ENCODE measurements at regions of chr12 and their contacts with region 1.

Region 1: GRCh38 chr12:32230613-32230993 is 124.0 kb downstream of the BICD1 start:
- DNase-seq: no peak
- ATAC-seq: no peak
- H3K4me3 ChIP-seq: no peak overlapping the region
- H3K4me3 Mint-ChIP-seq: no peak overlapping the region
- H3K27ac ChIP-seq: no peak overlapping the region
- H3K27ac Mint-ChIP-seq: no peak overlapping the region
- H3K4me1 ChIP-seq: no peaks in the 10 kb centered on the region
- H3K4me1 Mint-ChIP-seq: no peaks in the 10 kb centered on the region
- H3K27me3 ChIP-seq: no peaks in the 10 kb centered on the region
- H3K27me3 Mint-ChIP-seq: no peaks in the 10 kb centered on the region
- CTCF ChIP-seq: no peak

Region 2: GRCh38 chr12:32139064-32139421 is 91.6 kb before region 1 on chr12:
- CTCF ChIA-PET with region 1: no interaction called
- POLR2A ChIA-PET with region 1: no interaction called
- intact Hi-C with region 1: no loop called
- DNase-seq: peak in 5 of 14 experiments; percentile 9 to 46 (median 33)
- ATAC-seq: peak; percentile 51
- H3K4me3 ChIP-seq: peak overlapping the region; percentile 53
- H3K4me3 Mint-ChIP-seq: peak overlapping the region; percentile 87
- H3K27ac ChIP-seq: no peak overlapping the region
- H3K27ac Mint-ChIP-seq: peak overlapping the region; percentile 57
- H3K4me1 ChIP-seq: peaks cover 15% of the 10 kb centered on the region
- H3K4me1 Mint-ChIP-seq: peaks cover 41% of the 10 kb centered on the region
- H3K27me3 ChIP-seq: no peaks in the 10 kb centered on the region
- H3K27me3 Mint-ChIP-seq: no peaks in the 10 kb centered on the region
- CTCF ChIP-seq: no peak

Region 3: DNA sequence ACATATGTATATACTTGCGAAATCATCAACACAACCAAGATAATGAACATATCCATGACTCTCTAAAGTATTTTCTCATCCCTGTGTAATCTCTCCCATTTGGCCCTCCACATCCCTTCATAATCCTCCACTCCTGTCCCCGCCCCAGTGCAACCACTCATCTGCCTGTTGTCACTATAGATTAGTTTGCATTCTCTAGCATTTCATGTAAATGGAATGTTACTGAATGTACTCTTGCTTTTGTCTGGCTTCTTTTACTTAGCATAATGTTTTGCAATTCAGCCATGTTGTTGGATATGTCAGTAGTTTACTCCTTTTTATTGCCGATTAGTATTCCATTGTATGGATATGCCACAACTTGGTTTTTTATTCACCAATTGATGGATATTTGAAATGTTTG is 24.9 kb before region 1 on chr12:
- CTCF ChIA-PET with region 1: no interaction called
- POLR2A ChIA-PET with region 1: no interaction called
- intact Hi-C with region 1: loop called in 1 of 2 experiments (anchors 2 kb)
- DNase-seq: no peak
- ATAC-seq: no peak
- H3K4me3 ChIP-seq: no peak overlapping the region
- H3K4me3 Mint-ChIP-seq: no peak overlapping the region
- H3K27ac ChIP-seq: no peak overlapping the region
- H3K27ac Mint-ChIP-seq: no peak overlapping the region
- H3K4me1 ChIP-seq: no peaks in the 10 kb centered on the region
- H3K4me1 Mint-ChIP-seq: no peaks in the 10 kb centered on the region
- H3K27me3 ChIP-seq: no peaks in the 10 kb centered on the region
- H3K27me3 Mint-ChIP-seq: no peaks in the 10 kb centered on the region
- CTCF ChIP-seq: no peak